Activated CD4-positive, alpha-beta memory T cell treated with anti-CD3 and anti-CD28 coated beads for 36 hours (primary cell): ENCODE measurements at regions of chr22 and their contacts with region 1.

Region 1: DNA sequence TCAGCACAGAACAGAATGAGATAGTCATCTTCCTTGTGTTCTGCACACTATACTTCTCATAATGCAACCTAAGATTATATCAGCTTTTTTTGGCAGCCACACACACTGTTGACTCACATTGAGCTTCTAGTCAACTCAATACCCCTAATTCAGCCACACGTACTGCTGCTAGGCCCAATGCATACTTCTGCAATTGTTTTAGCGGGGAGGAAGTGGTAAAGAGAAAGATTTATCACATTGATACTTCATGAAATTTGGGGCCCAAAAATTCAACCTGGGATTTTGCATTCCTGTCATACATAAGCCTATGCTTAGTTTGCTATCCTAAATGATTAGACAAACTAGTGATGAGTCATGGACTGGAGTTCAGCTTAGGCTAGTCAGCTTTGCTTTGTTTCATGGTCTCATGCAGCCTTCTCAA is 8.6 kb upstream of the UPB1 start:
- DNase-seq: peak; percentile 65
- H3K4me3 Mint-ChIP-seq: no peak overlapping the region
- H3K27ac Mint-ChIP-seq: peak overlapping the region; percentile 16
- H3K4me1 Mint-ChIP-seq: peaks cover 25% of the 10 kb centered on the region
- H3K27me3 Mint-ChIP-seq: no peaks in the 10 kb centered on the region

Region 2: GRCh38 chr22:24106385-24107381 is 379.8 kb before region 1 on chr22:
- CTCF ChIA-PET with region 1: no interaction called
- POLR2A ChIA-PET with region 1: interaction called, 3 read pairs
- intact Hi-C with region 1: loop called (anchors 5 kb)
- DNase-seq: peak; percentile 43
- H3K4me3 Mint-ChIP-seq: no peak overlapping the region
- H3K27ac Mint-ChIP-seq: peak overlapping the region; percentile 23
- H3K4me1 Mint-ChIP-seq: peaks cover 36% of the 10 kb centered on the region
- H3K27me3 Mint-ChIP-seq: no peaks in the 10 kb centered on the region

Region 3: DNA sequence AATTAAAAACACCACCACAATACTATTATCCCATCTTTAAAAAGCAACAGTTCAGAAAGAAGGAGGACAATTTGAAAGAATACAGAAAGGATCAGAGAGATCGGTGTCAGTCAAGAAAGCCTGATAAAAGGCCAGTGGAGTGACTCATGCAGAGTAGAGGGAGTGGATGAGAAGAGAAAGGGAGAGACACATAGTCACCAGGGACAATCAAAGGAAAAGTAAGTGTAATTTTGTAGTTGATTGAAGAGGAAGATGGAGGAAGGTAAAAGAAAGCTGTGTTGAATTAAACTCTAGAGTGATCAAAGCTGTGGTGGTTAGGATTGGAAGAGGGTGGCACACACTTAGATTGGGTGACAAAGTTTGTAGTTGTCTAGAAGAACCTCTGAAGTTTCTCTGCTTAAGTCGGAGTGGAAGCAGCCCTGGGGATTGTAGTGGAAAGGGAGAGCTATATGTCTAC is 201.7 kb before region 1 on chr22:
- CTCF ChIA-PET with region 1: no interaction called
- POLR2A ChIA-PET with region 1: interaction called, 4 read pairs
- intact Hi-C with region 1: loop called (anchors 2 kb)
- DNase-seq: no peak
- H3K4me3 Mint-ChIP-seq: peak overlapping the region; percentile 2
- H3K27ac Mint-ChIP-seq: peak overlapping the region; percentile 53
- H3K4me1 Mint-ChIP-seq: peaks cover 43% of the 10 kb centered on the region
- H3K27me3 Mint-ChIP-seq: no peaks in the 10 kb centered on the region

Region 4: DNA sequence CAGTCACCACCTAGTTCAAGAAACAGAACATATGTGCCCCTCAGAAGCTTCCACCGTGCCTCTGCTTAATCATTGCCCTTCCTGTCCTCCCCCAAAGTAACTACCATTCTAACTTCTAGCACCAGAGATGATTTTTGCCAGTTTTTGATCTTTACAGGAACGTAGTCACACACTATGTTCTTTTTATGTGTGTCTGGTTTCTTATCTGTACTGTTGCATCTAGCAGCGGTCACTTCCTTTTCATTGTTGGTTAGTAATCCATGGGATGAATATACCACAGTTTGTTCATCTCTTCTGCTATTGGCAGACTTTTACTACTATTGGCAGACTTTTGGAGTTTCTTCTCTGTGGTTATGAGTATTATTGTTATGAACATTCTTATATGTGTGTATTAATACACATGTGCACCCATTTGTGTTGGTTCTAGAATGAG is 181.2 kb before region 1 on chr22:
- CTCF ChIA-PET with region 1: no interaction called
- POLR2A ChIA-PET with region 1: no interaction called
- intact Hi-C with region 1: loop called (anchors 1 kb)
- DNase-seq: peak; percentile 49
- H3K4me3 Mint-ChIP-seq: no peak overlapping the region
- H3K27ac Mint-ChIP-seq: peak overlapping the region; percentile 59
- H3K4me1 Mint-ChIP-seq: peaks cover 41% of the 10 kb centered on the region
- H3K27me3 Mint-ChIP-seq: no peaks in the 10 kb centered on the region

Region 5: GRCh38 chr22:24496661-24497060 is 10.2 kb after region 1 on chr22:
- CTCF ChIA-PET with region 1: no interaction called
- POLR2A ChIA-PET with region 1: no interaction called
- intact Hi-C with region 1: no loop called
- DNase-seq: no peak
- H3K4me3 Mint-ChIP-seq: no peak overlapping the region
- H3K27ac Mint-ChIP-seq: no peak overlapping the region
- H3K4me1 Mint-ChIP-seq: no peaks in the 10 kb centered on the region
- H3K27me3 Mint-ChIP-seq: peaks cover 16% of the 10 kb centered on the region